ENCODE measurements at regions of chr22 and their contacts with region 1.

Region 1: DNA sequence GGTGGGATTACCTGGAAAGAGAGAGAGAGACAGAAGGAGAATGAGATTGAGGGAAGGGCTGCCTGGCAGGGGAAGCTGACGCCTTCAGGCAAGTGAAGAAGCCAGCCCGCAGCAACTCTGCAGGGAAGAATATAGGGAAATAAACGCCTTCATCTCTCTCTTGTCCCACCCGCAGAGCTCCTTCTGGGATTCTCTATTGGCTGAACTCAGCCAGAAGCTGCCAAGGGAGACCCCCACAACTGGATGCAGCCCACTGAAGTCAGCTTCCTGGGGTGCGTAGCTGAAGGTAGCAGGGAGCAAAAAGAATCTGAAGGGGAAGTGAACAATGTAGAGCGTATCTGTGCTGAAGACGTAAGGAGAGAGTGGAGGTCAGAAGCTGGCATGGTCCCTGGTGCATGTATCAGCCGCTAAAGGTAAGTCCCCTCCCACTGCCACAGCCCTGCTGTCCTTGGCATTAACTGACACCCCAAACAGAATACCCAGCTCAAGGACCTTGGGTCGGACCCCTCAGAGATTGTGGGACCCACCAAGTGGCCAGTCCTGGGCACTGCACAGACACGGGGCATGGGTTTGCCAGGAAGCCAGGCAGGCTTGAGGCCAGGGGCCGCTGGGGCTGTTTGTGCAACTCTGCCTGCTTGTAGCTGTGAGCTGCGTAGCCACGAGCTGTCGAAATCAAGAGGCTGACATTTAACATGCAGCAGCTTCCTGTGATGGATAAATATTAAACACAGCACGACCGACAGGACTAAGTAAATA is 469.9 kb downstream of the MN1 start:
- DNase-seq: peak; percentile 69
- H3K4me3 Mint-ChIP-seq: no peak overlapping the region
- H3K27ac Mint-ChIP-seq: no peak overlapping the region
- H3K4me1 Mint-ChIP-seq: peaks cover 11% of the 10 kb centered on the region
- H3K27me3 Mint-ChIP-seq: peaks cover 58% of the 10 kb centered on the region
- CTCF ChIP-seq: peak; percentile 70

Region 2: DNA sequence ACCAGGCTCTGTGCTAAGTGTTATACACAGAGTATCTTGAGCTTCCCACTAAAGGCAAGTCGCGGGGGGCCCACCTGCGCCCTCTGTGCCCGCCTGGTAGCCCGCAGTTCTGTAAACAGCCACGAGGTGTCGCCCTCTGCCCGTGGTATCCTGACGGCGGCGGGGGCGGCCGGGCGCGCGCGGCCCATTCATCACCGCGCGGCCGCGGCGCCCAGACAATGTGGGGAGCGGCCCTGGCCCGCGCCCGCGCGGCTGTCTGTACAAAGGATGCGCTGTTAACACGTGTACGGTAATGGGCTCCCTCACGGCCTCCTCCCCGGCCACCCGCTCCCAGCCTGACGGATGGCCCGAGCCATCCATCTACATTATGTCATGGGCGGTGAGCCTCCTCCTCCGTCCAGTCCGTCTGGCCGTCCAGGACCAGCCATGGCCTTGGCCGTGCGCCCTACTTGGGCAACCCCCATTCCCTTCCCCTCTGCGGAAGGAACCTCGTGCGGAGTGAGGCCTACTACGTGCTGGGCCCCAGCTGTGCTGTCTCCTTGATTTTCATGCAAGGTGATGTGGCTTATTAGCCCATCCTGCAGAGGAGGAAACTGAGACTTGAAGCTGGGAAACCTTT is 574.9 kb before region 1 on chr22:
- CTCF ChIA-PET with region 1: no interaction called
- intact Hi-C with region 1: loop called (anchors 2 kb)
- DNase-seq: peak; percentile 73
- H3K4me3 Mint-ChIP-seq: peak overlapping the region; percentile 54
- H3K27ac Mint-ChIP-seq: no peak overlapping the region
- H3K4me1 Mint-ChIP-seq: no peaks in the 10 kb centered on the region
- H3K27me3 Mint-ChIP-seq: no peaks in the 10 kb centered on the region
- CTCF ChIP-seq: peak; percentile 95

Region 3: GRCh38 chr22:26845026-26845743 is 486.5 kb before region 1 on chr22:
- CTCF ChIA-PET with region 1: no interaction called
- intact Hi-C with region 1: loop called (anchors 5 kb)
- DNase-seq: peak; percentile 40
- H3K4me3 Mint-ChIP-seq: no peak overlapping the region
- H3K27ac Mint-ChIP-seq: no peak overlapping the region
- H3K4me1 Mint-ChIP-seq: peaks cover 60% of the 10 kb centered on the region
- H3K27me3 Mint-ChIP-seq: peaks cover 16% of the 10 kb centered on the region
- CTCF ChIP-seq: no peak

Measured in Calu3 (cell line).